IMR-90 (cell line): ENCODE measurements at regions of chr1 and their contacts with region 1.

Region 1: GRCh38 chr1:109483672-109484518 is at the start of gene ATXN7L2:
- DNase-seq: peak; percentile 89
- ATAC-seq: peak; percentile 94
- H3K4me3 ChIP-seq: peak within 1 kb of the TSS; percentile 59
- H3K27ac ChIP-seq: peak within 1 kb of the TSS; percentile 99
- H3K4me1 ChIP-seq: peaks cover 9% of the 10 kb centered on the region
- H3K27me3 ChIP-seq: peaks cover 20% of the 10 kb centered on the region
- CTCF ChIP-seq: no peak
- POLR2A ChIP-seq: peak; percentile 93
- RAD21 ChIP-seq: no peak
- total RNA-seq, gene ATXN7L2: 1.3 and 1.7 TPM in 2 replicates

Region 2: GRCh38 chr1:109277434-109278204 is 206.3 kb before region 1 on chr1:
- CTCF ChIA-PET with region 1: no interaction called
- POLR2A ChIA-PET with region 1: no interaction called
- dilution Hi-C with region 1: no loop called
- in situ Hi-C with region 1: no loop called
- intact Hi-C with region 1: no loop called
- DNase-seq: peak; percentile 64
- ATAC-seq: peak; percentile 62
- H3K4me3 ChIP-seq: no peak overlapping the region
- H3K27ac ChIP-seq: no peak overlapping the region
- H3K4me1 ChIP-seq: peaks cover 16% of the 10 kb centered on the region
- H3K27me3 ChIP-seq: no peaks in the 10 kb centered on the region
- CTCF ChIP-seq: peak; percentile 72
- POLR2A ChIP-seq: no peak
- RAD21 ChIP-seq: peak; percentile 75

Region 3: GRCh38 chr1:109446085-109446695 is 37.7 kb before region 1 on chr1:
- CTCF ChIA-PET with region 1: no interaction called
- POLR2A ChIA-PET with region 1: no interaction called
- dilution Hi-C with region 1: no loop called
- in situ Hi-C with region 1: no loop called
- intact Hi-C with region 1: loop called (anchors 5 kb)
- DNase-seq: peak; percentile 5
- ATAC-seq: peak; percentile 48
- H3K4me3 ChIP-seq: no peak overlapping the region
- H3K27ac ChIP-seq: no peak overlapping the region
- H3K4me1 ChIP-seq: no peaks in the 10 kb centered on the region; the same call in 1 of the 2 replicates
- H3K27me3 ChIP-seq: peaks cover 8% of the 10 kb centered on the region
- CTCF ChIP-seq: no peak
- POLR2A ChIP-seq: no peak
- RAD21 ChIP-seq: no peak

Region 4: DNA sequence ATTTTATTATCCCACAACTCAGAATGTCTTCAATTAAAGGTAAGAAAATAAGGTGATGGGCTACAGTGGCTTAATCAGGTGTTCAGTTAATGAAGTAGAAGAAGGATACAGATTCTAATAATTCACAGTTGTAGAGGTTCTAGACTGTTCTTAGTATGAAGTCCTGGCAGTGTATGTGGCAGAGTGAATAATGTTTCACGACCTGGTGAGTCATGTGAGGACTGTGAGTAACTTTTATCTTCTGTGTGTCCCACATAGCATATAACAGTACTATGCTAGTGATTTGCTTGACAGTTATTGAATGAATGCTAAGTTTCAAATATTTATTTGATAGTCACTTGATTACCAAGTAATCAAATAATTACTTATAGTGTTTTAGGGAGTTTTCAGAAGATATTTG is 886.9 kb after region 1 on chr1:
- CTCF ChIA-PET with region 1: no interaction called
- POLR2A ChIA-PET with region 1: no interaction called
- dilution Hi-C with region 1: no loop called
- in situ Hi-C with region 1: no loop called
- intact Hi-C with region 1: no loop called
- DNase-seq: peak; percentile 77
- ATAC-seq: peak; percentile 93
- H3K4me3 ChIP-seq: no peak overlapping the region
- H3K27ac ChIP-seq: no peak overlapping the region
- H3K4me1 ChIP-seq: no peaks in the 10 kb centered on the region
- H3K27me3 ChIP-seq: no peaks in the 10 kb centered on the region
- CTCF ChIP-seq: no peak
- POLR2A ChIP-seq: no peak
- RAD21 ChIP-seq: no peak